CD8-positive, alpha-beta memory T cell (primary cell): ENCODE measurements at regions of chr3 and their contacts with region 1.

Region 1: DNA sequence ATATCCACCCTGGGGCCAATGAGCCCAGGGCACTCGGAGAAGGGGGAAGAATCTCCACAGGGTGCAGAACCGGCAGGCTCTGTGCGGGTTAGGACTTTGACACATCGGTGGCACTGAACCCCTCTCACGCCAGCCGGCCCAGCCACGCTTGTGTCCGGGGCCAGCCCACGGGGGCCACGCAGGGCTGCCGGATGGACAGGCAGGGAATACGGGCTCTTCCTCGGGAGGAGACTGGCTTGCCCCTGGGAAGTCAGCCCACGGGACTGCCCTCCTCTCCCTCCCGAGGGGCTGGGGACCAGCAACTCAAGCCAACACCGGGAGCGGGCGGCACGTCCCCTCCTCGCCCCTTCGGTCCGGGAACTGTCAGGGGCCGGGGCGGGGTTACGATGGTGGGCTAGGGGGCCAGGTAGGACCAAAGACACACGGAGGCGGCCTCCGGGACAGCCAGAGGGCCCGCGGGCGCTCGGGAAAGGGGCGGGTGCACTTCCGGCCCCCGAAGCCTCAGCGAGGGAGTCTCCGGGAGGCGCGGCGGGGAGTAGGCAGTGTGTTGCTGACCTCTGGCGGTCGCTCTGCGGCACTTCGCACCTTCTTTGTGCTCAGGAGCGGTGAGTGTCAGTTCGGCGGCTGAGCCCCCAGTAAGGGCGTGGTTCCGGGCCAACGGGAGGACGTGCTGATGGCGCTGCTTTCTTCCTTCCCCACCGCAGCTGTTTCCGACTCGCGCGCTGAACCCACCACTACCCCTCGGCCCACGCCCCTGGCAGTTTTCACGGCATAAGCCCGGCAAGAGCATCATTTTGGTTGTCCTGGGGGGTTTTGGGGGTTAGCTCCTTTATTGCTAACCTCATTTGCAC is 5.1 kb upstream of the CYP8B1 start:
- DNase-seq: peak; percentile 80 to 91 (median 85)
- H3K4me3 ChIP-seq: peak overlapping the region; percentile 51
- H3K4me3 Mint-ChIP-seq: peak overlapping the region; percentile 77 to 91 (median 82)
- H3K27ac ChIP-seq: peak overlapping the region; percentile 34
- H3K27ac Mint-ChIP-seq: peak overlapping the region; percentile 25 to 96 (median 88)
- H3K4me1 ChIP-seq: peaks cover 10% of the 10 kb centered on the region
- H3K4me1 Mint-ChIP-seq: peaks cover 9 to 17% (median 12%) of the 10 kb centered on the region in 3 donors
- H3K27me3 ChIP-seq: no peaks in the 10 kb centered on the region
- H3K27me3 Mint-ChIP-seq: peaks cover 2 to 5% of the 10 kb centered on the region in 2 donors

Region 2: DNA sequence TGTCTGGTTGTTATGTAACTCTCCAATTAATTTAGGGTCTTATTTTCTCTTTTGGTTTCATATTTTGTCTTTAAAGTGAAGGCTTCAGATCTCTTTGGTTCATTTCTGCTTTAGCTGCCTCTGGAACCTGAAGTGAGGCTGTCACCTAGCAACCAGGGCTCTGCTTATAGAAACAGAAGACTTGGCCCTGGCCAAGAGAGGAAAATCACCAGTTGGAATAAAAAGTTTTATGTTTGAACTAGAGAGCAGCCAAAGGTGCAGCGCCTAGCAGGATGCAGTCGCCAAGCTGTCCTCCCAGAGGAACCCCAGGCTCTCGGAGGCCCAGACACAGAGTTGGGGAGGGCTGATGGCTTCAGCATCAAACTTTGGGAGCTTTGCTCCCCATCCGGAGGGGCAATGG is 511.5 kb before region 1 on chr3:
- CTCF ChIA-PET with region 1: no interaction called
- POLR2A ChIA-PET with region 1: no interaction called
- DNase-seq: peak in 1 of 5 donors; percentile 15
- H3K4me3 ChIP-seq: no peak overlapping the region
- H3K4me3 Mint-ChIP-seq: no peak overlapping the region
- H3K27ac ChIP-seq: no peak overlapping the region
- H3K27ac Mint-ChIP-seq: peak overlapping the region in 1 of 8 donors; percentile 78
- H3K4me1 ChIP-seq: no peaks in the 10 kb centered on the region
- H3K4me1 Mint-ChIP-seq: peaks cover 0 to 14% (median 3%) of the 10 kb centered on the region in 3 donors
- H3K27me3 ChIP-seq: no peaks in the 10 kb centered on the region
- H3K27me3 Mint-ChIP-seq: peaks cover 4 to 26% of the 10 kb centered on the region in 2 donors

Region 3: GRCh38 chr3:42778644-42779043 is 102.2 kb before region 1 on chr3:
- CTCF ChIA-PET with region 1: interaction called, 19 read pairs
- POLR2A ChIA-PET with region 1: no interaction called
- DNase-seq: no peak
- H3K4me3 ChIP-seq: no peak overlapping the region
- H3K4me3 Mint-ChIP-seq: no peak overlapping the region
- H3K27ac ChIP-seq: no peak overlapping the region
- H3K27ac Mint-ChIP-seq: peak overlapping the region in 1 of 8 donors; percentile 38
- H3K4me1 ChIP-seq: no peaks in the 10 kb centered on the region
- H3K4me1 Mint-ChIP-seq: peaks cover 0 to 3% (median under 1%) of the 10 kb centered on the region in 3 donors
- H3K27me3 ChIP-seq: no peaks in the 10 kb centered on the region
- H3K27me3 Mint-ChIP-seq: no peaks in the 10 kb centered on the region